A549 (cell line): ENCODE measurements at regions of chr3 and their contacts with region 1.

Region 1: GRCh38 chr3:128153156-128154041 is at the start of gene EEFSEC:
- DNase-seq: peak; percentile 39 to 85
- ATAC-seq: peak; percentile 96 to 97
- H3K4me3 ChIP-seq: peak within 1 kb of the TSS; percentile 75
- H3K27ac ChIP-seq: peak within 1 kb of the TSS; percentile 88 to 100
- H3K4me1 ChIP-seq: peaks cover 7% of the 10 kb centered on the region; the same call in 2 of the 3 replicates
- CTCF ChIP-seq: no peak
- EP300 ChIP-seq: no peak
- POLR2A ChIP-seq: peak; percentile 53
- RAD21 ChIP-seq: no peak
- polyA plus RNA-seq, gene EEFSEC: 6.9 and 7.5 TPM in 2 replicates

Region 2: DNA sequence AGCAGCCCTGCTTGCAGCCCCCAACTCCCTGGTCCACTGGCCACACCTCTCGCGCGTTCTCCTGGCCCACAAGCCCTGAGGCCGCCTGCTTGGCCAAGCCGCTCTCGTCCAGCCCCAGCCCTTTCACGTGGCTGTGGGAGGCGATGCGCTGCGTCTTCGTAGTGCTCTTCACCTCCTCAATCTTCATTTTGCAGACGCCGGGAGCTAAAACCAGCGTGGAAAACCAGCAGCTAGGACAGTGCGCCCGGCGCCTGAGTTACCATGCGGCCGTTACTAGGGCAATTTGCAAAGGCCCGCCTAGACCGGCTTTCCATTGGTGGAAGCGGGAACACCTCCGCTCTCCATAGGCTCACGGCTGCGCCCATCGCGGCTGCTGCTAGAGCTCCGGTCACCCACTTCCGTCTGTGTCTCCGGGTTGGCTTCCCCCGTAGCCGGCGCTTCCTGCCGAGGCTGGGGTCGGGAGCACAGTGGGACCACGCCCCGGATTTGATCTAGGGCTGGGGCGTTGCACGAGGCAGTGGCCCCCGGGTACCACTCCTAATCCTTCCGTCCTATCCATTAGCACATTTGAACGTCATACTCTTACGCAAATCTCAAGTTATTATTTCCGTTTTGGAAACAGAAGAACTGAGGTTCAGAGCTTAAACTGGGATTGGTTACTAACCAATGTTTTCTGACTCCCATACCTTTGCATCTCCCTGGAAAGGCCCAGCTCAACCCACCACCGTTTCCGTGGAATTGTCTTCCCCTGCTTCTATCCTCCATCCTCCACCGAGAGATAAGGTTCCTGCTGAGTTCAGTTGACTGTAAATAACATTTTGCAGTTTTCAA is 29.6 kb before region 1 on chr3 and contains the start of gene RUVBL1:
- CTCF ChIA-PET with region 1: no interaction called
- POLR2A ChIA-PET with region 1: interaction called, 21 read pairs
- DNase-seq: peak; percentile 92 to 97
- ATAC-seq: peak; percentile 100
- H3K4me3 ChIP-seq: peak within 1 kb of the TSS; percentile 99
- H3K27ac ChIP-seq: peak within 1 kb of the TSS; percentile 90 to 92
- H3K4me1 ChIP-seq: peaks cover 7% of the 10 kb centered on the region; the same call in 2 of the 3 replicates
- CTCF ChIP-seq: no peak
- EP300 ChIP-seq: no peak
- POLR2A ChIP-seq: peak; percentile 42
- RAD21 ChIP-seq: no peak
- polyA plus RNA-seq, gene RUVBL1: 117 and 144 TPM in 2 replicates